HepG2 (cell line): ENCODE measurements at regions of chr10 and their contacts with region 1.

Region 1: DNA sequence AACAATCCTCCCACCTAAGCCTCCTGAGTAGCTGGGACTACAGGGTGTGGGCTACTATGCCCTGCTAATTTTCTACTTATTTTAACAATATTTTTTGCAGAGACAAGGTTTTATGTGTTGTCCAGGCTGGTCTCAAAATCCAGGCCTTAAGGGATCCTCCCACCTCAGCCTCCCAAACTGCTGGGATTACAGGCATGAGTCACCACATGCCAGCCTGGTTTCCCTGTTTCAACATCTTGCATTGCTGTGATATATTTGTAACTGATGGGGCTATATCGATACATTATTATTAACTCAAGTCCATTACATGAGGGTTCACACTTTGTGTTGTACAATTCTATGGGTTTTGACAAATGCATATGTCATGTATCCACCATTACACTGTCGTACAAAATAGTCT is 41.9 kb upstream of the OGDHL start:
- DNase-seq: no peak
- ATAC-seq: no peak
- H3K4me3 ChIP-seq: no peak overlapping the region
- H3K27ac ChIP-seq: no peak overlapping the region
- H3K4me1 ChIP-seq: no peaks in the 10 kb centered on the region
- H3K27me3 ChIP-seq: no peaks in the 10 kb centered on the region; a peak in 1 of 5 replicates
- CTCF ChIP-seq: no peak
- EP300 ChIP-seq: no peak
- POLR2A ChIP-seq: no peak
- RAD21 ChIP-seq: no peak

Region 2: GRCh38 chr10:49518982-49519578 is 284.9 kb before region 1 on chr10:
- CTCF ChIA-PET with region 1: no interaction called
- POLR2A ChIA-PET with region 1: no interaction called
- in situ Hi-C with region 1: no loop called
- intact Hi-C with region 1: no loop called
- DNase-seq: peak; percentile 36
- ATAC-seq: peak; percentile 82
- H3K4me3 ChIP-seq: no peak overlapping the region
- H3K27ac ChIP-seq: no peak overlapping the region
- H3K4me1 ChIP-seq: peaks cover 12% of the 10 kb centered on the region
- H3K27me3 ChIP-seq: no peaks in the 10 kb centered on the region
- CTCF ChIP-seq: peak; percentile 73
- EP300 ChIP-seq: no peak
- POLR2A ChIP-seq: no peak
- RAD21 ChIP-seq: no peak; the same call in 1 of the 2 replicates

Region 3: GRCh38 chr10:49817845-49818244 is 13.9 kb after region 1 on chr10:
- CTCF ChIA-PET with region 1: no interaction called
- POLR2A ChIA-PET with region 1: no interaction called
- in situ Hi-C with region 1: no loop called
- intact Hi-C with region 1: no loop called
- DNase-seq: no peak
- ATAC-seq: no peak
- H3K4me3 ChIP-seq: no peak overlapping the region
- H3K27ac ChIP-seq: no peak overlapping the region
- H3K4me1 ChIP-seq: no peaks in the 10 kb centered on the region
- H3K27me3 ChIP-seq: no peaks in the 10 kb centered on the region
- CTCF ChIP-seq: no peak
- EP300 ChIP-seq: no peak
- POLR2A ChIP-seq: no peak
- RAD21 ChIP-seq: no peak

Region 4: DNA sequence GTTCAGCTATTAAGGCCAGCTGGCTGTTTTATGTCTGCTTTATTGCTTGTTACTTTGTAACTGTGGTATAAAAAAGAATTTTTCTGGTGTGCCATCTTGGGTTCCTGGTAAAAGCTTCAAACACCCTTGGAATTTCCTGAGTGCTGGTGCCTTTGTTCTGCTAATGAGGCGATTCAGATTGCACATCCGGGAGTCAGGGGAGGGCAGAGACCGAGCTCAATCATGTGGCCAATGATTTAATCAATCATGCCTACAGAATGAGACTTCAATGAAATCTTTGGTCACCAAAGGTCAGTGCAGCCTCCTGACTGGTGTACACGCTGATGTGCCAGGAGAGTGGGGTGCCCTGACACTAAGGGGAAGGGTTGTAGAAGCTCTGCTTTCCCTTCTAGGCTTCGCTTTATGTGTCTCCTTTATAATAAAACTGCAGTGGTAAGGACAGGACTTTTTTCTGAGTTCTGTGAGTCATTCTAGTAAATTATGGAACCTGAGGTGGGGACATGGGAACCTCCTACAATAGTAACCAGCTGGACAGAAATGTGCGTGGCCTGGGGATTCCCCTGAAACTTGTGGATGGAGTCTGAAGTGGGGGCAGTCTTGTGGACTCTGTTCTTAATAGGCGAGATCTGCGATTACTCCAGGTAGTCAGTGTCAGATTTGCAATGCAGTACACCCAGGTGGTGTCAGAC is 27.5 kb after region 1 on chr10:
- CTCF ChIA-PET with region 1: no interaction called
- POLR2A ChIA-PET with region 1: no interaction called
- in situ Hi-C with region 1: no loop called
- intact Hi-C with region 1: loop called (anchors 2 kb)
- DNase-seq: no peak
- ATAC-seq: no peak
- H3K4me3 ChIP-seq: no peak overlapping the region
- H3K27ac ChIP-seq: no peak overlapping the region
- H3K4me1 ChIP-seq: peaks cover 3% of the 10 kb centered on the region
- H3K27me3 ChIP-seq: no peaks in the 10 kb centered on the region
- CTCF ChIP-seq: no peak
- EP300 ChIP-seq: no peak
- POLR2A ChIP-seq: no peak
- RAD21 ChIP-seq: no peak